Mammary epithelial cell (primary cell): ENCODE measurements at regions of chr16 and their contacts with region 1.

Region 1: GRCh38 chr16:74973153-74973703 is 11.7 kb downstream of the WDR59 start:
- DNase-seq: no peak
- H3K4me3 ChIP-seq: no peak overlapping the region
- H3K27ac ChIP-seq: no peak overlapping the region
- H3K4me1 ChIP-seq: no peaks in the 10 kb centered on the region
- H3K27me3 ChIP-seq: no peaks in the 10 kb centered on the region
- CTCF ChIP-seq: no peak

Region 2: GRCh38 chr16:74868501-74868900 is 104.7 kb before region 1 on chr16:
- CTCF ChIA-PET with region 1: no interaction called
- dilution Hi-C with region 1: no loop called
- in situ Hi-C with region 1: no loop called
- intact Hi-C with region 1: no loop called
- DNase-seq: peak; percentile 60
- H3K4me3 ChIP-seq: peak overlapping the region; percentile 33 to 54 (median 53)
- H3K27ac ChIP-seq: peak overlapping the region; percentile 58
- H3K4me1 ChIP-seq: peaks cover 17% of the 10 kb centered on the region
- H3K27me3 ChIP-seq: no peaks in the 10 kb centered on the region
- CTCF ChIP-seq: no peak

Region 3: DNA sequence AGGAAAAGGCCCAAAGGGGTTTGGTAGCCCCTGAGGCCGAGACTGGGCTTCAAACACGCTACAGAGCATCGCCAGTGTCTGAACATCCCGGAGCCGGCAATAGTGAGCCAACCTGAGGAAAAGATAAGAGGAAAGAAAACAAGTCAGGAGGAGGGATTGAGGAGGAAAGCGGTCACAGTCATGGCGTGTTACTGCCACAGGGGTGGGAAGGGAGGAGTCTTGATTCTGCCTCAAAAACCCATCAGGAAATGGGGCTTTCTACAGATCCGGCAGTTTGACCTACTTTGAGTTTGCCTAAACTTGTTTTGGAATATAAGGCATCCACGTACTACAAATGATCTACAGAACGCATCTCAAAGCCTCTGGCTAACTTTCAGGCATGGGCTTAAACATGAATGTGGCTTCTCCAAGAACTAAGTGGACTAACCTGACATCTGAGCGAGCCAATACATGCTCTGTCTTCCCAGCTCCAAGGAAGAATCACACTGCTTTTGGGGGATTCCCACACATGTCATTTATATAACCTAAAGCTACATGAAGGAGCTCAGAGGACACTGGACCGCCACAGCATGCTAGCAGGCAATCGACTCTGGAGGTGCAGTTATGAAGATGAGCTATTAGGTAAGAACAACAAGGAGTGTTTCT is 84.9 kb before region 1 on chr16:
- CTCF ChIA-PET with region 1: no interaction called
- dilution Hi-C with region 1: loop called (anchors 10 kb)
- in situ Hi-C with region 1: no loop called
- intact Hi-C with region 1: no loop called
- DNase-seq: no peak
- H3K4me3 ChIP-seq: no peak overlapping the region
- H3K27ac ChIP-seq: no peak overlapping the region
- H3K4me1 ChIP-seq: no peaks in the 10 kb centered on the region
- H3K27me3 ChIP-seq: no peaks in the 10 kb centered on the region
- CTCF ChIP-seq: no peak

Region 4: DNA sequence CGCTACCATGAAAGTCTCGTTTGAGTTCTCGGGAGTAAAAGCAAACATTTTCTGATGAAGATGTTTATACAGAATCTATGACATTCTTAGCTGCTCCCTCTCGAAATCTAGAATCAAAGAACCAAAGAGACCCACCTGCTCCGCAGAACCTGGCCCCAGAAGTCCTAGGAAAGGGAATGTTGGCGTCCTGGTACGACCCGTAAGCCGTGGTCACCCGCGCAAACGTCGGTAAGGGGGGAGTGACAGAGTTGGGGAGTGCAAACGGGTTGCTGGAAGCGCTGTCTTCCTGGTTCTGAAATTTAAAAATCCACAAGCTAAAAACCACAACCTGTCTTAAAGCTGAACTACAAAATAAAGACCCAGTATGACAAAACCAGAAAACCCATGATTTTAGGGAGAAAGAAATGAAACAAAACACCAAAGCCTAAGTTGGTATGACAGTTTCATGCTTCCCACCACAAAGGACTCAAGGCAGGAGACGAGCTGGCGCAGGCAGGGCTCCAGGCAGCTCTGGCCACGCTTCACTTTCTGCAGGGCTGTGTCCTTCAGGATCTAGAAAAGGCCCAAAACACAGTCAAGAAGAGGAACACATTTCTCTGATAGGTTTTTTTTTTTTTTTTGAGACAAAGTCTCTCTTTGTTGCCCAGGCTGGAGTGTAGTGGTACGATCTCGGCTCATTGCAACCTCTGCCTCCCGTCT is 63.7 kb before region 1 on chr16:
- CTCF ChIA-PET with region 1: no interaction called
- dilution Hi-C with region 1: loop called (anchors 10 kb)
- in situ Hi-C with region 1: no loop called
- intact Hi-C with region 1: no loop called
- DNase-seq: no peak
- H3K4me3 ChIP-seq: no peak overlapping the region
- H3K27ac ChIP-seq: no peak overlapping the region
- H3K4me1 ChIP-seq: no peaks in the 10 kb centered on the region
- H3K27me3 ChIP-seq: no peaks in the 10 kb centered on the region
- CTCF ChIP-seq: no peak